Dendritic cell treated with granulocyte-macrophage colony-stimulating factor and Interleukin-4, amounts not matched to agents 40 ng/mL and 50 ng/mL, for 4 days (primary cell): ENCODE measurements at regions of chrX and their contacts with region 1.

Region 1: DNA sequence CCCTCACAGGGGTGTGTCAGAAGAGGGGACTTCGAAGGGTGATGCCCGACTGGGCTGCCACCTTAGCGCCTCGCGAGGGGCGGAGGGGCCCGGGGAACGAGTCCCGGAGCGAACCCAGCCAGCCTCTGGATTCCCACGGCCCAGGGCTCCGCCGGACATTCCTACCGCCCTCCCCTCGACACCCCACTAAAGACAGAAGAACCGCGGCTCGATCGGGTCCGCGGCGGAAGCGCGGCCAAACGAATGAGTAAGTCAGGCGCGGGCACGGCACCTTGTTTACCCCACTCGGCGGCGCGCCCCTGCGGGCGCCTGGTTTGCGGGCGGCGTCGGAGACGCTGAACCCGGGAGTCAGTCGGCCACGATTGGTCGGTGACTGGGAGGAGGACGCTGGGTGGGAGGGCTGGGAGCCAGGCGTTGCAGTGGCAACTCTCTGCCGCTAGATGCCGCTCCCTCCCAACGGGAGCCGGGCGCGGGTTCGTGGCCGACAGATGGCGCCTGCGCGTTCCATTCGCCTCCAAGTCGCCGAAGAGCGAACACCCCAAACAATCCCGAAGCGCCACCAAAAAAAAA is 1.4 kb upstream of the STAG2 start:
- H3K4me3 Mint-ChIP-seq: peak overlapping the region; percentile 95
- H3K27ac Mint-ChIP-seq: peak overlapping the region; percentile 100
- H3K4me1 Mint-ChIP-seq: peaks cover 6% of the 10 kb centered on the region
- H3K27me3 Mint-ChIP-seq: no peaks in the 10 kb centered on the region

Region 2: DNA sequence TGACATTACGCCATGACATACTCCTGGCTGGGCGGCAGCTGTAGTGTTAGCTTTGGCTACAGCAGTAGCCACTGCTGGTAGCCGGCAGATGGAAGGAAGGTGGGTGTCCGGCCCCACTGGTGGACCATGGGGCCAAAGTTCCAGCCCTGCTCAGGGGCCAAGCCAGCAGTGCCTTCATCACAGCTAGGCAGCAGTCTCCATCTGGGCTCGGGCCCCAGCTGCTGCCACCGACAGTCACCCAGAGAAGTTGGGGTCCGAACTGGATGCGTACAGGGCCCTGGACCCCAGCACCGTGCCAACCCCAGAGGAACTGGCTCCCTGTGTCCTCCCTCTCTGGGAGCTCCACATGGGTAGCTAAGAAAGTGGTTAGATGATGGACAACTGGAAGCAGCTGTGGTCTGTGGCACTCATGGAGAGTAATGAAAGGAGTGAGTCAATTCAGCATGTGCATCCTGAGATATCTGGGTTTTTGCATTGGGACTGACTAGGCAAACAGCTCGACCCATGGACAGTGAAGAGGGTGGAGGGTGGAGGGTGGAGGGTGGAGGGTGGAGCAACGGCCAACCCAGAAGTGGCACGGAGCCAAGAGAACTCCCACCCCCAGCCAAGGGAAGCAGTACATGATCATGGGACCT is 1142.7 kb before region 1 on chrX:
- intact Hi-C with region 1: no loop called
- H3K4me3 Mint-ChIP-seq: no peak overlapping the region
- H3K27ac Mint-ChIP-seq: no peak overlapping the region
- H3K4me1 Mint-ChIP-seq: no peaks in the 10 kb centered on the region
- H3K27me3 Mint-ChIP-seq: no peaks in the 10 kb centered on the region

Region 3: DNA sequence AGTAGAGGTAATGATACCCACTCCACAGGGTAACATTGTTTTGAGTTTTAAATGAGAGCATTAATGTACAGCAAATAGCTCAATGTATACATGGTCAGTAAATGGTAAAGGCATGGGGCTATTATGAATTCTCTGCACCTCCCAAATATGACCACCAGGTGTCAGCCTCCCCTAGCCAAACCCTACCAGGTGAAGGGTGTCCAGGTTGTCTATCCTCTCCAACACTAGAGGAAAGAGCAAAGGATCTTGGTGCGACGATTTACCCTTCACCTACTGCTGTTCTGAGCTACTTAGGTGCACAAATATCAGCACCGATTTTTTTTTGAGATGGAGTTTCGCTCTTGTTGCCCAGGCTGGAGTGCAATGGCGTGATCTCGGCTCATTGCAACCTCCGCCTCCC is 126.7 kb before region 1 on chrX:
- intact Hi-C with region 1: loop called (anchors 10 kb)
- H3K4me3 Mint-ChIP-seq: no peak overlapping the region
- H3K27ac Mint-ChIP-seq: no peak overlapping the region
- H3K4me1 Mint-ChIP-seq: peaks cover 14% of the 10 kb centered on the region
- H3K27me3 Mint-ChIP-seq: peaks cover 2% of the 10 kb centered on the region

Region 4: GRCh38 chrX:123899701-123900100 is 60.4 kb before region 1 on chrX:
- intact Hi-C with region 1: loop called (anchors 10 kb)
- H3K4me3 Mint-ChIP-seq: no peak overlapping the region
- H3K27ac Mint-ChIP-seq: no peak overlapping the region
- H3K4me1 Mint-ChIP-seq: no peaks in the 10 kb centered on the region
- H3K27me3 Mint-ChIP-seq: no peaks in the 10 kb centered on the region

Region 5: GRCh38 chrX:123976706-123977316 is 16.7 kb after region 1 on chrX:
- intact Hi-C with region 1: loop called (anchors 2 kb)
- H3K4me3 Mint-ChIP-seq: no peak overlapping the region
- H3K27ac Mint-ChIP-seq: no peak overlapping the region
- H3K4me1 Mint-ChIP-seq: peaks cover 29% of the 10 kb centered on the region
- H3K27me3 Mint-ChIP-seq: no peaks in the 10 kb centered on the region